Ascending aorta (tissue), 2 donors: ENCODE measurements at regions of chr15 and their contacts with region 1.

Region 1: GRCh38 chr15:78000091-78000926 is 77.2 kb downstream of the TBC1D2B start:
- DNase-seq: no peak
- H3K4me3 ChIP-seq: no peak overlapping the region
- H3K27ac ChIP-seq: no peak overlapping the region
- H3K4me1 ChIP-seq: peaks cover 9 to 21% of the 10 kb centered on the region in 2 donors
- H3K27me3 ChIP-seq: no peaks in the 10 kb centered on the region
- CTCF ChIP-seq: peak in 1 of 3 experiments; percentile 26

Region 2: DNA sequence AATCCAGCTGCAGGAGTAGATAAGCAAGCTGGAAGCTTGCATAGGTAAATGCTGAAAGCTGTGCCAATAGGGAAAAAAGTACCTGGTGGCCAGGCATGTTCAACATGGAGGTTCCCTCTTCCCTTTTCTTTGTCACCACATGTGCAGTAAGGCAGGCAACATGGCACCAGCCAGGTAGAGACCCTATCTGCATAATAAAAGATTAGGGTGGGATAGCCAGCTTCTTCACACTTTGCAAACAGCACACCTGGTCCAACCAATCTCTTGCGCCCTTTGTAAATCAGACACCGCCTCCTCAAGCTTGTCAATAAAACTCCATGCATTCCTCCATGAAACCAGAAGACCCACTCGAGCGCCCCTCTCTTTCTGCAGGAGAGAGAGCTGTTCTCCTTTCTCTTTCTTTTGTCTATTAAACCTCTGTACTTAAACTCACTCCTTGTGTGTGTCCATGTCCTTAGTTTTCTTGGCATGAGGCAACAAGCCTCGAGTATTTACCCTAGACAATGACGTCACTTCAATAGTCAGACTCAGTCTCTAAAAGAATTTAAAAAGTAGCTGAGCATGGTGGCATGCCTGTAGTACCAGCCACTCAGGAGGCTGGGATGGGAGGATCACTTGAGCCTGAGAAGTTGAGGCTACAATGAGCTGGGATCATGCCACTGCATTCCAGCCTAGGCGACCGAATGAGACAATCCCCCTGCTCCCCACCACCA is 1351.4 kb before region 1 on chr15:
- intact Hi-C with region 1: no loop called
- DNase-seq: no peak
- H3K4me3 ChIP-seq: no peak overlapping the region
- H3K27ac ChIP-seq: no peak overlapping the region
- H3K4me1 ChIP-seq: no peaks in the 10 kb centered on the region
- H3K27me3 ChIP-seq: no peaks in the 10 kb centered on the region
- CTCF ChIP-seq: no peak

Region 3: DNA sequence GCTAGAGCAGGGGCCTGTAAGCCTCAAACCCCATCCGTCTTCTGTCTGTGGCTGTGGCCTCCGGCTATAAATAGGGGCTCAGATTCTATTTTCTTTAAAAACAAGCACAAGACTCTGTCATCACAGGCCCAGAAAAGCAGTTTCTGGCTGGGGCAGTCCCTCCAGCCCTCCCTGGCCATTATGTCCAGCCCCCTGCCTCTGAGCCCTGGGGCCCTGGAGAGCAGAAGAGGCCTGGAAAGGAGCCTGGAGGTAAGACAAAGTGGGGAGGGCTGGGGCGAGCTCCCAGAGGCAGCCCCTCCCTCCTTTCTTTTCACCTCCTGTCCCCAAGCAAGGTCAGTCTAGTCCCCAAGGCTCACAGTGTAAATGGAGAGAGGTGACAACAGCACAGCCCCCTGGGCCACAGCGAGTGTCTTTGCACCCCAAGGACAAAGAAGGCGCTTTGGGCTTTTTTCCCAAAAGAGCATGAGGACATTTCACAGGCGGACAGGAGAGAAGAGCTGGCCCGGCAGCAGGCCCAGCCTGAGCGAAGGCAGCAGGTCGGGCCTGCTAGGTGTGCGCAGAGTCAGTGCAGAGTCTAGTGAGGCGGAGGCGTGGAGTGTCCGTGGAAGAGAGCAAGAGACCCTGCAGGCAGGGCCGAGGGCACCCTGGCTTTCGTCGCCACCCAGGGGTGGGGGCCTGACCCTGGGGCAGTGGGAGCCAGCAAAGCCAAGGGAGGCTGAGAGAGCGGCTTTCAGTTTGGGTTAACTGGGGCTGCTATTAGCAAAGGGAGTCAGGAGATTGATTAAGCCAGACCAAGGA is 111.1 kb before region 1 on chr15:
- intact Hi-C with region 1: loop called (anchors 10 kb)
- DNase-seq: peak in 1 of 2 donors; percentile 78
- H3K4me3 ChIP-seq: no peak overlapping the region
- H3K27ac ChIP-seq: peak overlapping the region; percentile 94 to 98
- H3K4me1 ChIP-seq: peaks cover 29 to 61% of the 10 kb centered on the region in 2 donors
- H3K27me3 ChIP-seq: no peaks in the 10 kb centered on the region
- CTCF ChIP-seq: no peak

Region 4: GRCh38 chr15:77974098-77974414 is 26.3 kb before region 1 on chr15:
- intact Hi-C with region 1: no loop called
- DNase-seq: no peak
- H3K4me3 ChIP-seq: no peak overlapping the region
- H3K27ac ChIP-seq: no peak overlapping the region
- H3K4me1 ChIP-seq: peaks cover 0 to 3% of the 10 kb centered on the region in 2 donors
- H3K27me3 ChIP-seq: no peaks in the 10 kb centered on the region
- CTCF ChIP-seq: no peak

Region 5: GRCh38 chr15:78065973-78066946 is 66.0 kb after region 1 on chr15:
- intact Hi-C with region 1: loop called (anchors 2 kb)
- DNase-seq: peak in 1 of 2 donors; percentile 60
- H3K4me3 ChIP-seq: peak overlapping the region; percentile 6 to 27
- H3K27ac ChIP-seq: peak overlapping the region; percentile 71 to 83
- H3K4me1 ChIP-seq: peaks cover 42 to 83% of the 10 kb centered on the region in 2 donors
- H3K27me3 ChIP-seq: no peaks in the 10 kb centered on the region
- CTCF ChIP-seq: no peak